AG04449 (cell line): ENCODE measurements at regions of chr3 and their contacts with region 1.

Region 1: GRCh38 chr3:124032648-124033359 is 40.9 kb upstream of the ROPN1 start:
- DNase-seq: peak; percentile 17
- H3K4me3 ChIP-seq: peak overlapping the region; percentile 90
- CTCF ChIP-seq: peak; percentile 93

Region 2: GRCh38 chr3:124014366-124014942 is 18.4 kb before region 1 on chr3:
- CTCF ChIA-PET with region 1: interaction called, 98 read pairs
- POLR2A ChIA-PET with region 1: no interaction called
- DNase-seq: no peak
- H3K4me3 ChIP-seq: no peak overlapping the region
- CTCF ChIP-seq: no peak

Region 3: GRCh38 chr3:124044956-124045355 is 12.2 kb after region 1 on chr3:
- CTCF ChIA-PET with region 1: interaction called, 24 read pairs
- POLR2A ChIA-PET with region 1: interaction called, 5 read pairs
- DNase-seq: no peak
- H3K4me3 ChIP-seq: no peak overlapping the region
- CTCF ChIP-seq: no peak

Region 4: DNA sequence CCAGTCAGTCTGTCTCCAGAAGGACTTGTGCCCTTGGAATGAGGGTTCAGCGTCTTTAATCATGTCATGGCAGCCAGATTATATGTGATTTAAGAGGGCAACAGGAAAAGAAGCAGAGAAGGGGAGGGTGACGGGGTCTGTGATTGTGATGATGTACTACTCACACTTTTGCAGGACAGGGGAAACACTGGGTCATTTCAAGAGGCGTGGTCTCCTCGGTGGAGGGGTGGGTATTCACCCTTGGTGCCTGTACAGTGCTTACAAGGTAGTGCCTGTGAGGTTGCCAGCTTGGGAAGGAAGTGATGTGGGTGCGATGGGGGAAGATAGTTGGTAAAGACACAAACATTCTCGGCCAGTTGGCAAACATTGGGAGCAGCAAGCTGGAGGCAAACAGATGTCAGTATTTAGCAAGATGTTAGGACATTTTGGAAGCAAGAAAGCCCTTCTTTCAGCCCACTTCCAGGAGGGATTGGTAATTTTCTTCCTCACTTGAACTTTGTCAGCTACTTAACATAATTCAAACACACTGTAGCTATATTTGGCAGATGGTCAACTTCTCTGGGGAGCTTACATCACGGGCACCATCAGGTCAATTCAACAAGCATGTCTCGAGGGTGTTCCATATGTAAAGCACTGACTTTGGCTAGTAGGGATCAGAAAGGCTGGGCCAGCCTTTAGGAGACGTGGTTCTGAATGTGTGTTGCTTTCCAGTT is 30.5 kb after region 1 on chr3:
- CTCF ChIA-PET with region 1: interaction called, 38 read pairs
- POLR2A ChIA-PET with region 1: interaction called, 4 read pairs
- DNase-seq: peak; percentile 40
- H3K4me3 ChIP-seq: no peak overlapping the region
- CTCF ChIP-seq: no peak

Region 5: DNA sequence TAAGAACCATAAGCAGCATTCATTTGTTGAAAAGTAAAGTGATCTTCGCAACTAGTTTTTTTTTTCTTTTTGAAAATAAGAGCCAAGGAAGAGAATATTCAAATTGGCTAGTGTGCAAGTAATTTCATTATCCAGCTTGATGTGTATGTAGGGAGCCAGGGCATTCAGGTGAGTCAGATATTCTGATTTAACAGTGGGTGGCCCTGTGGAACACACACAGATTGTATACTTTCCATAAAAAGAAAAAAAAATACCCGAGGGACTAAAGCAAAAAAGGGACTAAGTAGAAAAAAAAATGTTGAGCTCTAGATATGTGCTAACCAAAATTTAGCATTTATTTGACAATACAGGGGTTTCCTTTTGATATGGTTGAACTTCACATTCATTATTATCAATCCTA is 56.0 kb after region 1 on chr3:
- CTCF ChIA-PET with region 1: interaction called, 19 read pairs
- POLR2A ChIA-PET with region 1: interaction called, 3 read pairs
- DNase-seq: no peak
- H3K4me3 ChIP-seq: no peak overlapping the region
- CTCF ChIP-seq: no peak

Region 6: GRCh38 chr3:124158369-124158881 is 125.6 kb after region 1 on chr3:
- CTCF ChIA-PET with region 1: no interaction called
- POLR2A ChIA-PET with region 1: no interaction called
- DNase-seq: no peak
- H3K4me3 ChIP-seq: no peak overlapping the region
- CTCF ChIP-seq: no peak

Region 7: GRCh38 chr3:124281453-124282316 is 248.9 kb after region 1 on chr3:
- CTCF ChIA-PET with region 1: interaction called, 17 read pairs
- POLR2A ChIA-PET with region 1: no interaction called
- DNase-seq: no peak
- H3K4me3 ChIP-seq: no peak overlapping the region
- CTCF ChIP-seq: peak; percentile 58